Activated naive CD8-positive, alpha-beta T cell treated with anti-CD3 and anti-CD28 coated beads, Interleukin-2, amount 10 ng/mL, durations not matched to agents 7 days and 5 days (primary cell): ENCODE measurements at regions of chr1 and their contacts with region 1.

Region 1: GRCh38 chr1:111507411-111508201 is 4.2 kb upstream of the ADORA3 start:
- DNase-seq: peak; percentile 71
- ATAC-seq: peak; percentile 76
- H3K4me3 Mint-ChIP-seq: peak overlapping the region; percentile 79
- H3K27ac Mint-ChIP-seq: peak overlapping the region; percentile 90
- H3K4me1 Mint-ChIP-seq: peaks cover 47% of the 10 kb centered on the region
- H3K27me3 Mint-ChIP-seq: no peaks in the 10 kb centered on the region

Region 2: DNA sequence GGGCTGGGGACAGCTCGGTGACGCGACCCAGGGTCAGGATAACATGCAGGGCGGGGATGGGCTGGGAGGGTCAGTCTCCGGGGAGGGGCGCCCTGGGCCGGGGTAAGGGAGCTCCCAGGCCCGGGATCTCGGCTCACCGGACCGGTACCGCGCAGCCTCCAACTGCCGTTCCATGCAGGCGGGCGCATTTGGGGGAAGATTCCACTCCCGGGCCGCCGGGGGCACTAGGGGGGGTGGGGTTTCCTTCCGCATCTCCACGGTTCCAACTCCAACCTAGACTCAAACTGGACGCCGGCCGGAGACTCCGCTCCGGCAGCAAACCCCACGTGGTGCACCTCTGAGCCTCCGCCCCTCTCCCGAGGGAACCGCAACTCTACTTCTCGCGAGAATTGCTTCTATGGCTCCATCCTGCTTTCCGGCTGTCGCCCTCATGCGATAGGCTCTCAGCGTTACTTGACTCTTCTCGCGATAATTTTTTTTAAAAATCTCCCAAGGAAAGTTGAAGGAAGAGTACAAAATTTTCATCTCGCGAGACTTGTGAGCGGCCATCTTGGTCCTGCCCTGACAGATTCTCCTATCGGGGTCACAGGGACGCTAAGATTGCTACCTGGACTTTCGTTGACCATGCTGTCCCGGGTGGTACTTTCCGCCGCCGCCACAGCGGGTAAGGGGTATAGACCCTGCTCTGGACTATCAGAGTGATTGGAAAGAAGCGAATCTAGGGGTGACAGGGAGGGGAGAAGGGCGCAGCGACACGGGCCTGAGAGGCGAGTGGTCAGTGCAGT is 58.5 kb before region 1 on chr1 and contains the starts of genes ATP5PB and WDR77:
- POLR2A ChIA-PET with region 1: interaction called, 19 read pairs
- DNase-seq: peak; percentile 83
- ATAC-seq: peak; percentile 94
- H3K4me3 Mint-ChIP-seq: peak within 1 kb of the TSS; percentile 99
- H3K27ac Mint-ChIP-seq: peak within 1 kb of the TSS; percentile 94
- H3K4me1 Mint-ChIP-seq: peaks cover 61% of the 10 kb centered on the region
- H3K27me3 Mint-ChIP-seq: no peaks in the 10 kb centered on the region
- total RNA-seq, gene ATP5PB: 259 to 260 TPM
- total RNA-seq, gene WDR77: 35.7 to 35.9 TPM

Region 3: GRCh38 chr1:111481387-111482221 is 26.0 kb before region 1 on chr1:
- POLR2A ChIA-PET with region 1: interaction called, 29 read pairs
- DNase-seq: peak; percentile 71
- ATAC-seq: peak; percentile 64
- H3K4me3 Mint-ChIP-seq: no peak overlapping the region
- H3K27ac Mint-ChIP-seq: no peak overlapping the region
- H3K4me1 Mint-ChIP-seq: peaks cover 34% of the 10 kb centered on the region
- H3K27me3 Mint-ChIP-seq: peaks cover 5% of the 10 kb centered on the region

Region 4: GRCh38 chr1:111592389-111593361 is 85.1 kb after region 1 on chr1:
- POLR2A ChIA-PET with region 1: interaction called, 39 read pairs
- DNase-seq: peak; percentile 75
- ATAC-seq: peak; percentile 96
- H3K4me3 Mint-ChIP-seq: peak overlapping the region; percentile 73
- H3K27ac Mint-ChIP-seq: peak overlapping the region; percentile 96
- H3K4me1 Mint-ChIP-seq: peaks cover 51% of the 10 kb centered on the region
- H3K27me3 Mint-ChIP-seq: no peaks in the 10 kb centered on the region

Region 5: DNA sequence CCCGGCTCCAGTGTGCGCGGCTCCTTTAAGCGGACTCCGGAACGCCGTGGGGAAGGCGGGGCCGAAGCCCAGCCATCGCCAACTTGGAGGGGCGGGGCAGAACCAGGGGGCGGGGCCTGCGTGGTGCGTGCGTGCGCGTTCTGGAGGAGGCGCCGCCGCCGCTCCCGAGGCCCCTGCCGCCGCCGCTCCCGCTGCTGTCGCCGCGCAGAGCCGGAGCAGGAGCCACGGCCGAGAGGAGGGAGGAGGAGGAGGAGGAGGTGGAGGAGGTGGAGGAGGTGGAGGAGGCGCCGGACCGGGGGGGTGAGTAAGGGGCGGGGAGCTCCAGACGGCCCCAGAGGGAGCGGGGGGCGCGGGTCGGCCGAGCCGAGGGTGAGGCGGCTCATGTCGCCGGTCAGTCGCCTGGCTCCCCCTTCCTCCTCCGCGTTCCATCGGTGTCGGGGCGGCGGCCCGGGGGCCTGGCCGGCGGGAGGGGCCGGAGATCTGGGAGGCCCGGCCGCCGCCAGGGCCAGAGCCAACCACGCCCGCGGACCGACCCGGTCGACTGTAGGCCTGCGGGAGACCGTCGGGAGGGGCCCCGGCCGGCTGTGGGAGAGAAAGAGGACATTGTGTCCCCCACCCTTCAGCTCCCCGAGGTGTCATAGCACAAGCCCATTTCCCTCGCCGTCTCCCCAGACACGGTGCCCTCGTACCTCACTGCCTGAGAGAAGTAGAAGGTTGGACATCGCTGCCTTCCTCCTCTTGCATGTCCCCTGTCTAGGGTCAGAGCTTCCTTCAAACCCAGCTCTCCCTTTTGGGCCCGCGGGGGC is 112.2 kb after region 1 on chr1 and contains the start of gene RAP1A:
- POLR2A ChIA-PET with region 1: interaction called, 24 read pairs
- DNase-seq: peak; percentile 95
- ATAC-seq: peak; percentile 69
- H3K4me3 Mint-ChIP-seq: peak within 1 kb of the TSS; percentile 99
- H3K27ac Mint-ChIP-seq: peak within 1 kb of the TSS; percentile 91
- H3K4me1 Mint-ChIP-seq: peaks cover 56% of the 10 kb centered on the region
- H3K27me3 Mint-ChIP-seq: no peaks in the 10 kb centered on the region
- total RNA-seq, gene RAP1A: 134 to 139 TPM

Region 6: DNA sequence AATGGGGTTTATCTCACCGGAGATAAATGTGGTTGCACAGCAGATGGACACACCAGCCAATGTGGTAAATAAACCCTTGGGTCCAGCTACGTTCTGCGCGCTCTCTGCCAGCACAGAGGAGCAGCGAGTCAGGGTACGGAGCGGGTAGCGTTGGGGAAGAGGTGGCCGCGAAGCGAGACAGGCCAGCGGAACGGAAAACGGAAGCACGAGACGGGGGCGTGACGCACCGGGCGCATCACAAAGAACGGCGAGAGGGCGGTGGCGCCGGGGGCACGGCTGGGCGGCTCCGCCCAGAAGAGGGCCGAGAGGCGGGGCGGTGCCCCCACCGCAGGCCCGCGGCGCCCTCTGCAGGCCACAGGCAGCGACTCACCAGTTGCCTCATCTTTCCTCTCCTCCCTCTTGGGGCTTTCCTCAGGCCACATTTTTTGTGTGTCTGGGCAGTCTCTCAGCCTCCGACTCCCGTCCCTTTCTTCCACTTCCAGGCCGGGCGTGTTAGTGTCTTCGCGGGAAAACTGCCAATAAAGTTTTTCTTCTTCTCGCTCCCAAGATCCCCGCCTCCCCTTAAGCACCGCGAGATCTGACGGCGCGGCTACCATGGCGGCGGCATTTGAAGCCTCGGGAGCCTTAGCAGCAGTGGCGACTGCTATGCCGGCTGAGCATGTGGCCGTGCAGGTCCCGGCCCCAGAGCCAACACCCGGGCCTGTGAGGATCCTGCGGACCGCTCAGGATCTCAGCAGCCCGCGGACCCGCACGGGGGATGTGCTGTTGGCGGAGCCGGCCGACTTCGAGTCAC is 247.9 kb after region 1 on chr1 and contains the start of gene DDX20:
- POLR2A ChIA-PET with region 1: interaction called, 25 read pairs
- DNase-seq: peak; percentile 96
- ATAC-seq: peak; percentile 85
- H3K4me3 Mint-ChIP-seq: peak within 1 kb of the TSS; percentile 98
- H3K27ac Mint-ChIP-seq: peak within 1 kb of the TSS; percentile 99
- H3K4me1 Mint-ChIP-seq: peaks cover 35% of the 10 kb centered on the region
- H3K27me3 Mint-ChIP-seq: no peaks in the 10 kb centered on the region
- total RNA-seq, gene DDX20: 15.0 to 16.5 TPM